Left lung (tissue), 14 donors: ENCODE measurements at regions of chr20 and their contacts with region 1.

Region 1: DNA sequence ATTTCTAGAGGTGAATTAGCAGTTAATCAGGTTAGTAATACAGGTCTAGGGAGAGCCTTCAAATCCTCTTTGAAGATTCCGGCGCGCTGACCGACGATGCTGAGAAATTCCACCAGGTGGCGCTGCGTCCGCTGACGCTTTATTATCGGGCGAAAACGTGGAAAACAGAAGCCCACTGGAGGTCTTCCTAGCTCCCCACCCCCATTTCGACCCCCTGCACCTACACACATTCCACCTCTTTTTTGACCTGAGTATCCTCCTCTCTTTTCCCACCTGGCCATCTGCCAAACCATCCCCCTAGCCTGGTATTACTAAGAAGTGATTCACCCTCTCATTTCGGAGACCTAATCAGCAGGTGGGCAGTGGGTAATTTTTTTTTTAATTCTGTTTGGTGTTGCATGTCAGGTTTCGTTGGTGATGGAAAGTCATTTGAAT is 65.4 kb upstream of the RIN2 start:
- DNase-seq: peak; percentile 34 to 86 (median 50)
- ATAC-seq: peak; percentile 78
- H3K4me3 ChIP-seq: no peak overlapping the region
- H3K27ac ChIP-seq: no peak overlapping the region
- H3K4me1 ChIP-seq: peaks cover 0 to 7% of the 10 kb centered on the region in 2 donors
- H3K27me3 ChIP-seq: no peaks in the 10 kb centered on the region
- CTCF ChIP-seq: peak; percentile 85 to 87

Region 2: DNA sequence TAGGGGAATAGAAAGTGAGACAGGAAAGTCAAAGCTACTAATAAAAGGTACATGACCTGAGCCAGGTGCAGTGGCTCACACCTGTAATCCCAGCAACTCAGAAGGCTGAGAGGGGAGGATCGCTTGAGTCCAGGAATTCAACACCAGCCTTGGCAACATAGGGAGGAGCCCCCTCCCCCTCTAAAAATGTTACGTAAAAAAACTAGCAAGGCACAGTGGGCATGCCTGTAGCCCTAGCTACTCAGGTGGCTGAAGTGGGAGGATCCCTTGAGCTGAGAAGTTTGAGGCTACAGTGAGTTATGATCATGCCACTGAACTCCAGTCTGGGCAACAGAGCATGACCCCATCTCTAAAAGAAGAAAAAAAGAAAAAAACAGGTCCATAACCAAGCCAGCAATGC is 120.7 kb before region 1 on chr20:
- intact Hi-C with region 1: no loop called
- DNase-seq: no peak
- ATAC-seq: no peak
- H3K4me3 ChIP-seq: no peak overlapping the region
- H3K27ac ChIP-seq: no peak overlapping the region
- H3K4me1 ChIP-seq: no peaks in the 10 kb centered on the region
- H3K27me3 ChIP-seq: no peaks in the 10 kb centered on the region
- CTCF ChIP-seq: no peak

Region 3: DNA sequence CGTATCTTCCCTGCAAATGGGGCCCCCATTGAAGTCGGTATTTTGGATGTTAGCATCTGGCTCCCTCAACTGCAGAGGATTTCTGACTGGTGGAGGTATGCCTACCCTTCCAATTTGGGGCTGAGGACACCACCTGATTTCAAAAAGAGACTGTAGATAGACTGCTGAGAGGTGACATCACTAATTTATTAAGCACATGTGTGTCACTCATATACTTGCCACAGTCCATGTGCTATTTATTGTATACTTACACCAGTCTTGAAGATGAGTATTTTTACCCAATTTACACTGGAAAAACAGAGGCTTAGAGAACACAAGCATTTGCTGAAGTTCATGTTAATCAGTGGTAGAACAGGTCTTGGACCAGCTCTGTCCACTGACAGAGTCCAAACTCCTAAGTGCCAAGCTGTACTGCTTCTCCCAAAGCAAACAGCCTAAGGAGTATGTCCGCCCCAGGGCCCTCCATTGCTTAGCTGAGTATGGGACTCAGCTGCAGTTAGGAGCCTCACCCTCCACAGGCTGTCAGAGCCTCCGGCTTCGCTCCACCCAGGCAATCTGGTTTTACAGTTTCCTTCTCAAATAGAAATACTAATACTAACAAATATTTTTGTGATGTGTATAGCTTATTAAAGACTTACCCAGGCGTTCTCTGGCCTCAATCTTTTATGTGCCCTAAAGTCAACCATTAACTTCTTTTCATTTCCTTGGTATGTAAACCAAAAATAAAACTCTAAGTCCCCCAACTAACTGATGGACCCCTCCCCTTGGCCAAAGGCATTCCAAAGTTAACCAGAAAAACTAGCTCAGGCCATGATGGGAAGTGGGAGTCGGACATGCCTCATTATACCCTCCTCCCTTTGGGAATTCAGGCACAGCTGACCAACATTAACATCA is 82.9 kb after region 1 on chr20:
- intact Hi-C with region 1: loop called in 1 of 2 experiments (anchors 10 kb)
- DNase-seq: peak in 1 of 4 donors; percentile 49
- ATAC-seq: peak; percentile 88
- H3K4me3 ChIP-seq: no peak overlapping the region
- H3K27ac ChIP-seq: no peak overlapping the region
- H3K4me1 ChIP-seq: peaks cover 23 to 25% of the 10 kb centered on the region in 2 donors
- H3K27me3 ChIP-seq: no peaks in the 10 kb centered on the region
- CTCF ChIP-seq: no peak

Region 4: GRCh38 chr20:20003031-20003954 is 310.6 kb after region 1 on chr20:
- intact Hi-C with region 1: loop called in 1 of 2 experiments (anchors 10 kb)
- DNase-seq: peak in 3 of 4 donors; percentile 45 to 54 (median 50)
- ATAC-seq: peak; percentile 58
- H3K4me3 ChIP-seq: peak overlapping the region in 1 of 2 donors; percentile 5
- H3K27ac ChIP-seq: peak overlapping the region; percentile 37 to 75
- H3K4me1 ChIP-seq: peaks cover 16 to 58% of the 10 kb centered on the region in 2 donors
- H3K27me3 ChIP-seq: no peaks in the 10 kb centered on the region
- CTCF ChIP-seq: no peak